ENCODE measurements at regions of chr10 and their contacts with region 1.

Region 1: DNA sequence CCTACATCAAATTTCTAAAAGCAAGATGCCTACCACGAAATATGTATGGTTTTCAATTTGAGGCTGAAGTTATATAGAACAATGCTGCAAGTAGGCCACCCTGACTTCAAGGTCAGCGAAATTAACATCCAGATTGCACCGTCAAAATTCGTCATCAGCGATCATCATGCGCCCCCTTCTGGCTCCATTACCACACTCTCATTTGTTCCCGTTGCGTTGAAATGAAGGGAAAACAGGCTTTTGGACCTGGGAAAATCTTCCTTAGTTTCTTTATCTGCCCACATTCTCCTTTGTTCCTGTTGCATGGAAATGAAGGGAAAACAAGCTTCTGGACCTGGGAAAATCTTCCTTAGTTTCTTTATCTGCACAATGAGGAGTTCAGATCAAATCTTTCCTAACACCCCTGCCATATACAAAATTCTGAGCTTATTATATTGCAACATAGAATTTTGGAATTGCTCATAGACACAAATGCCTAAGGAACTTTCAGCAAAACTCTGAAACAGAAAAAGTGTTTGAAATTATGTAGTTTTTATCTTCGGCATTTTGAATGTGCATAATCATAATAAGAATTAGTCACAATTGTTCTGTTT is 98.2 kb upstream of the PRKCQ start:
- DNase-seq: peak in 3 of 5 donors; percentile 30 to 49 (median 31)
- ATAC-seq: no peak
- H3K4me3 ChIP-seq: no peak overlapping the region
- H3K27ac ChIP-seq: no peak overlapping the region
- H3K4me1 ChIP-seq: peaks cover 0 to 10% (median 0%) of the 10 kb centered on the region in 12 donors
- H3K27me3 ChIP-seq: peaks cover 0 to 6% (median 0%) of the 10 kb centered on the region in 9 donors
- CTCF ChIP-seq: peak; percentile 38 to 78 (median 67)
- POLR2A ChIP-seq: no peak

Region 2: DNA sequence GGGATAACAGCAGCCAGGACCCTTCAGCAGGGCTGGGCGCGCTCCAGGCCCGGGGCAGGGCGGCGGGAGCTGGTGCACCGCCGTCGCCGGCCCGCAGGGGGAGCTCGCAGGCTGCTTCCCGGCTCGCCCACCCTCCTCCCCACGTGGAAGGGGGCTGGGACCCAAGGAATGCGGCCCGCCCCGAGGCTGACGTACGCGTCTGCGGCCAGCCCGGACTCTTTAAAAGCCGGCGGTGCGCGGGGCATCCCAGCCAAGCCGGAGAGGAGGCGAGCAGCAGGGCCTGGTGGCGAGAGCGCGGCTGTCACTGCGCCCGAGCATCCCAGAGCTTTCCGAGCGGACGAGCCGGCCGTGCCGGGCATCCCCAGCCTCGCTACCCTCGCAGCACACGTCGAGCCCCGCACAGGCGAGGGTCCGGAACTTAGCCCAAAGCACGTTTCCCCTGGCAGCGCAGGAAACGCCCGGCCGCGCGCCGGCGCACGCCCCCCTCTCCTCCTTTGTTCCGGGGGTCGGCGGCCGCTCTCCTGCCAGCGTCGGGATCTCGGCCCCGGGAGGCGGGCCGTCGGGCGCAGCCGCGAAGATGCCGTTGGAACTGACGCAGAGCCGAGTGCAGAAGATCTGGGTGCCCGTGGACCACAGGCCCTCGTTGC is 475.5 kb before region 1 on chr10 and contains the start of gene PFKFB3:
- intact Hi-C with region 1: no loop called
- DNase-seq: peak; percentile 96 to 99 (median 97)
- ATAC-seq: peak; percentile 95
- H3K4me3 ChIP-seq: peak within 1 kb of the TSS; percentile 66 to 89 (median 78)
- H3K27ac ChIP-seq: peak within 1 kb of the TSS; percentile 61 to 99 (median 94)
- H3K4me1 ChIP-seq: peaks cover 0 to 59% (median 30%) of the 10 kb centered on the region in 12 donors
- H3K27me3 ChIP-seq: no peaks in the 10 kb centered on the region
- CTCF ChIP-seq: peak in 11 of 12 donors; percentile 96 to 99 (median 98)
- POLR2A ChIP-seq: peak; percentile 89 to 99
- total RNA-seq, gene PFKFB3: 8.4 to 53.1 (median 15.1) TPM

Region 3: GRCh38 chr10:6416892-6417512 is 261.3 kb before region 1 on chr10:
- intact Hi-C with region 1: loop called in 7 of 10 experiments (anchors 5 to 10 kb)
- DNase-seq: no peak
- ATAC-seq: peak in 3 of 4 donors; percentile 55 to 69 (median 59)
- H3K4me3 ChIP-seq: no peak overlapping the region
- H3K27ac ChIP-seq: no peak overlapping the region
- H3K4me1 ChIP-seq: no peaks in the 10 kb centered on the region
- H3K27me3 ChIP-seq: peaks cover 0 to 3% (median 0%) of the 10 kb centered on the region in 9 donors
- CTCF ChIP-seq: peak; percentile 44 to 72 (median 56)
- POLR2A ChIP-seq: no peak

Region 4: DNA sequence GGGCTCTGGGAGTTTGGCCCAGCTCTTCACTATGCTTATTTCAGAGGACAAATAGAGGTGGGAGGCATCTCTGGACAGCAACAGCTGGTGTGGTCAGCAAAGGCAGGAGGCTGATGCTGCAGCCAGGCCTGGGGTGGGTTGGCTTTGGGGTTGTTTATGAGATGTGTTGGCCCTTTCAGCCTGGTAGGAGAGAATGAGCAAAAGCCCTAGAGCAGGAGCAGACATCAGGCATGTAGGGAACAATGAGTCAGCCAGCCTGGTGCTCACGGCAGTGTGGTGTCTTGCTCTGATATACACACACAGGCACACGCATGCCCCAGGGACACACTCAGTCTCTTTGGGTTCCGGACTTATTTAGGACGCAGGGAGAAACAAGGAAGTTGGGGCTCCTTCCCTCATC is 255.3 kb before region 1 on chr10:
- intact Hi-C with region 1: loop called in 7 of 10 experiments (anchors 5 to 10 kb)
- DNase-seq: no peak
- ATAC-seq: no peak
- H3K4me3 ChIP-seq: no peak overlapping the region
- H3K27ac ChIP-seq: no peak overlapping the region
- H3K4me1 ChIP-seq: no peaks in the 10 kb centered on the region
- H3K27me3 ChIP-seq: no peaks in the 10 kb centered on the region
- CTCF ChIP-seq: no peak
- POLR2A ChIP-seq: no peak

Region 5: GRCh38 chr10:6445501-6446316 is 232.6 kb before region 1 on chr10:
- intact Hi-C with region 1: loop called in 1 of 10 experiments (anchors 10 kb)
- DNase-seq: peak in 3 of 5 donors; percentile 16 to 50 (median 34)
- ATAC-seq: no peak
- H3K4me3 ChIP-seq: peak overlapping the region in 3 of 12 donors; percentile 10 to 35 (median 26)
- H3K27ac ChIP-seq: no peak overlapping the region
- H3K4me1 ChIP-seq: peaks cover 0 to 5% (median 0%) of the 10 kb centered on the region in 12 donors
- H3K27me3 ChIP-seq: peaks cover 0 to 5% (median 0%) of the 10 kb centered on the region in 9 donors
- CTCF ChIP-seq: peak; percentile 26 to 67 (median 42)
- POLR2A ChIP-seq: no peak

Region 6: DNA sequence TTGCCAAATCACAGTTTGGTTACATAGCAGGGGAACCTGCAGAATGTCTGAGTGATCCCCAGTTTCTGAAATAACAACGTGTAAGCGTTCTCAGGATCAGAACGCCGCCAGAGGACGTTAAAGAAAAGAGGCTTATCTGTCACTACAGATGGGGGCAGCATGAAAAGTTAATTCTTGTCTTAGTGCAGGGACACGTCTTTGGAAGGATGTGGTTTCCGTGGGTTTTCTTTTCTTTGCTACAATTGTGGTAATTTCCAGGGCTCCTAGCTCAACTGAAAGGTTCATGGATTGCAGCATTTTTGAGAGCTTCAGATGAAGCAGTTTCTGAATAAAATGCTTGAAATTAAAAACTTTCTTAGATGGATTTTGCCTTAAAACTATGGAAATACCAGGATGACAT is 204.9 kb before region 1 on chr10:
- intact Hi-C with region 1: no loop called
- DNase-seq: no peak
- ATAC-seq: no peak
- H3K4me3 ChIP-seq: peak overlapping the region in 1 of 12 donors; percentile 27
- H3K27ac ChIP-seq: peak overlapping the region in 1 of 12 donors; percentile 85
- H3K4me1 ChIP-seq: peaks cover 0 to 26% (median 0%) of the 10 kb centered on the region in 12 donors
- H3K27me3 ChIP-seq: peaks cover 0 to 7% (median 0%) of the 10 kb centered on the region in 9 donors
- CTCF ChIP-seq: no peak
- POLR2A ChIP-seq: no peak

Region 7: GRCh38 chr10:6580279-6581029 is 97.9 kb before region 1 on chr10:
- intact Hi-C with region 1: loop called in 4 of 10 experiments (anchors 2 to 10 kb)
- DNase-seq: peak; percentile 47 to 90 (median 66)
- ATAC-seq: peak; percentile 47 to 95 (median 81)
- H3K4me3 ChIP-seq: peak overlapping the region; percentile 19 to 70 (median 53)
- H3K27ac ChIP-seq: peak overlapping the region in 1 of 12 donors; percentile 84
- H3K4me1 ChIP-seq: peaks cover 0 to 32% (median 0%) of the 10 kb centered on the region in 12 donors
- H3K27me3 ChIP-seq: peaks cover 0 to 65% (median 30%) of the 10 kb centered on the region in 9 donors
- CTCF ChIP-seq: peak in 11 of 12 donors; percentile 25 to 76 (median 51)
- POLR2A ChIP-seq: no peak

Region 8: DNA sequence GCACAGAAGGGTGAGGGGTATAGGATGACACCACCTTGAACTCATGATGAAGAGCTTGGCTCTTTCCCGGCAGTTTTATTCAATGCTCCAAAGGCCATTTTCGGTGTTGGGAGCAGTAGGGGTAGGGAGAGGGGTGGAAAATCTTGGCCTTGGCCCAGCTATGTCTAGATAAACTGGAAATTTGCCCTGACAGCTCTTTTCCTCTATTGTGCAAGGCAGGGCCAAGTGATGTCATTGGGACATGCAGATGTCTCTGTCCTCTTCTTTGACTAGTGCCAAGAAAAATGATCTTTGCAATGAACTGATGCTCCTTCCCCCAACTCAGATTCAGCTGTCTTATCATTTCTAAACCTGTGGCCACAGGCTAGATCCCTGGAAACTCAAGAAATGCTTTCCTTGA is 70.5 kb before region 1 on chr10:
- intact Hi-C with region 1: no loop called
- DNase-seq: peak in 3 of 5 donors; percentile 9 to 61 (median 21)
- ATAC-seq: peak in 2 of 4 donors; percentile 10 to 39
- H3K4me3 ChIP-seq: no peak overlapping the region
- H3K27ac ChIP-seq: no peak overlapping the region
- H3K4me1 ChIP-seq: peaks cover 0 to 13% (median 0%) of the 10 kb centered on the region in 12 donors
- H3K27me3 ChIP-seq: peaks cover 0 to 21% (median 2%) of the 10 kb centered on the region in 9 donors
- CTCF ChIP-seq: no peak
- POLR2A ChIP-seq: no peak

Measured in heart left ventricle (tissue), 16 donors.